ENCODE measurements at regions of chr9 and their contacts with region 1.

Region 1: DNA sequence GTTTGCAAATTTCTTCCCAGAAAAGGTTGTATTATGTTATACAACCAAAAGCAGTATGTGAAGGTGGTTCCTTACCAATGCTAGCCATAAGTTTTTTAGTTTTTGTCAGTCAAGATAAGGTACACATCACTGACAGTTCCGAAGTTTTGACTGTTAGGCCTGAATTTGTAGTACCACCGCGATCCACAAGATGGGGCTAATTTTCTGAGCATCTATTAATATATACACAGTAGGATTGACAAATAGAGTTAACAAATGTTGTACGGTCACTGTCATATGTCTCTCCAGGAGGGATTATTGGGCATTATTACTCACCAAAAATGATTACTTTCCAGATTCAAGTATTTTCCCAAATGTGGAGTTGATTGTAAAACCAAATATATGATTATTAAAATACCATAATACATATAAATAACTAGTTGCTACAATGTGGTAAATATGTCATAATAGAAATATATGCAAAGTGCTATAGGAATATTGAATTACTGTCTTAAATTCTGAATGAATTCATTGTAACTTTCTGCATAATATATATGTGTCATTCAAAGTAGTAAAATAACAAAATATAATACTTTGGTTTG is 28.4 kb upstream of the LRRC19 start:
- DNase-seq: peak; percentile 28 to 71
- ATAC-seq: peak; percentile 73

Region 2: DNA sequence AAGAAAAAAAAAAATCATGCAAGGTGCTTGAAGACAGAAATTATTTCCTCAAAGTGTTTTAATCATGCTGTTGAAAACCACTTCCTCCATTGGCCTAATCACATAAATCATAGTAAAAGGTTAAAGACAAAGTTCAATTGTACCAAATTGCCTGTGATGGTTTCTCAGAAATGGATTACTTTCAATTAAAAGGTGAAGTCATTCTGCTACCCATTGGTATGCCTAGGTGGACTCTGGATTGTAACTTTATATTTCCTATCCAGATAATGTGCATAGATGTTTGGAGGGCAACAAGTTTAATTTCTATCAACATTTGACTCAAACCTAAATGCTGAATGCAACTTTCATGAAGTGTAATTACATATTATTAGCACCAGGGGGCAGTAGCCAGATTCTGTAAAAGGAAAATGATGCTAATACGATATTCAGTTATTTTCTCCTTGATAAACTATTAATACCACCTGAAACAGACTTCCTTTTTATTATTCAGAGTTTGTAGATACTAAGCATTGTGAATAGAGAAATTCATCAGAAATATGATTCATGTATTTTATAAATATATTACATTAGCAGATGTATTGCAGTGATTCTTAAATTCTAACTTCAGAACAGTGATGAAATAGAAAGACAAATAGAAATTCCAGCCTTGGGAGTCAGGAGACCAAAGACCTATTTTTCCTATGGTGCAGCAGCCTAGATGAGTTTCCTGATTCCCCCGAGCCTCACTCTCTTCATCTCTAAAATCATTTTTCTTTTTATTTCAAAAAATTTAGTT is 289.5 kb before region 1 on chr9:
- intact Hi-C with region 1: no loop called
- DNase-seq: no peak
- ATAC-seq: peak; percentile 37

Region 3: GRCh38 chr9:27276193-27277030 is 242.5 kb after region 1 on chr9:
- intact Hi-C with region 1: loop called (anchors 5 to 10 kb)
- DNase-seq: no peak
- ATAC-seq: peak; percentile 72

Region 4: GRCh38 chr9:27329288-27329687 is 295.4 kb after region 1 on chr9:
- intact Hi-C with region 1: no loop called
- DNase-seq: no peak
- ATAC-seq: no peak

Region 5: GRCh38 chr9:27548055-27548741 is 514.3 kb after region 1 on chr9:
- intact Hi-C with region 1: loop called in 1 of 2 experiments (anchors 10 kb)
- DNase-seq: no peak
- ATAC-seq: peak; percentile 68

Measured in left colon (tissue), 2 donors.